ENCODE measurements at regions of chr11 and their contacts with region 1.

Region 1: DNA sequence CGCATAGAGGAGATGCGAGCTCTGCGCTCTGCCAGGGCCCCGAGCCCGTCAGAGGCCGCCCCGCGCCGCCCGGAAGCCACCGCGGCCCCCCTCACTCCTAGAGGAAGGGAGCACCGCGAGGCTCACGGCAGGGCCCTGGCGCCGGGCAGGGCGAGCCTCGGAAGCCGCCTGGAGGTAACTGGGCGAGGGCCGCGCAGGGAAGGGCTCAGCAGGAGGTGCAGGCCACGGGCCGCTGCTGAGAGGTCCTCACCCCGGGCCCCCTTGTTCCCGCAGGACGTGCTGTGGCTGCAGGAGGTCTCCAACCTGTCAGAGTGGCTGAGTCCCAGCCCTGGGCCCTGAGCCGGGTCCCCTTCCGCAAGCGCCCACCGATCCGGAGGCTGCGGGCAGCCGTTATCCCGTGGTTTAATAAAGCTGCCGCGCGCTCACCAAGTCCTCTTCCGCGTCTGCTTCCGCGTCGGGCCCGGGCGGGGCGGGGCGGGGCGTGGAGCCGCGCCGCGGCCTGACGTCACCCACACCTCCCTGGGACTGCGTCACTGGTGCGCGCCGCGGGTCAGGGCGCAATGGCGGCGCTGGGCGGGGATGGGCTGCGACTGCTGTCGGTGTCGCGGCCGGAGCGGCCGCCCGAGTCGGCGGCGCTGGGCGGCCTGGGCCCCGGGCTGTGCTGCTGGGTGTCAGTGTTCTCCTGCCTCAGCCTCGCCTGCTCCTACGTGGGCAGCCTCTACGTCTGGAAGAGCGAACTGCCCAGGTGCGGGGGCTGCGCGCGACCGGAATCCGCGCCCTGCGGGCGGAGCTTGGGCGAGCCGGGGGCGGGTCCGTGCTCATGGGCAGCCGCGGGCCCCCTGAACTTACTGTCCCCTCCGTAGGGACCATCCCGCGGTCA is at the start of gene RCE1:
- DNase-seq: peak; percentile 52
- H3K4me3 ChIP-seq: peak within 1 kb of the TSS; percentile 100
- H3K27ac ChIP-seq: peak within 1 kb of the TSS; percentile 96
- H3K27me3 ChIP-seq: no peaks in the 10 kb centered on the region
- CTCF ChIP-seq: no peak
- polyA plus RNA-seq, gene RCE1: 9.2 and 11.4 TPM in 2 replicates

Region 2: DNA sequence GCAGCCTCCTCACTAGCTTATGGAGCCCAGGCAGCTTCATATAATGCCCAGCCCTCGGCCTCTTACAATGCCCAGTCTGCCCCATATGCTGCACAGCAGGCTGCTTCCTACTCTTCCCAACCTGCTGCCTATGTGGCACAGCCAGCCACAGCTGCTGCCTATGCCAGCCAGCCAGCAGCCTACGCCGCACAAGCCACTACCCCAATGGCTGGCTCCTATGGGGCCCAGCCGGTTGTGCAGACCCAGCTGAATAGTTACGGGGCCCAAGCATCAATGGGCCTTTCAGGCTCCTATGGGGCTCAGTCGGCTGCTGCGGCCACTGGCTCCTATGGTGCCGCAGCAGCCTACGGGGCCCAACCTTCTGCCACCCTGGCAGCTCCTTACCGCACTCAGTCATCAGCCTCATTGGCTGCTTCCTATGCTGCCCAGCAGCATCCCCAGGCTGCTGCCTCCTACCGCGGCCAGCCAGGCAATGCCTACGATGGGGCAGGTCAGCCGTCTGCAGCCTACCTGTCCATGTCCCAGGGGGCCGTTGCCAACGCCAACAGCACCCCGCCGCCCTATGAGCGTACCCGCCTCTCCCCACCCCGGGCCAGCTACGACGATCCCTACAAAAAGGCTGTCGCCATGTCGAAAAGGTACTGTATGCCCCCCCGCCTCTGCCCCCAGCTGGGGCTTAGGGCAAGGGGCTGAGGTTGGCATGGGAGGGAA is 217.9 kb before region 1 on chr11:
- CTCF ChIA-PET with region 1: no interaction called
- POLR2A ChIA-PET with region 1: no interaction called
- DNase-seq: no peak
- H3K4me3 ChIP-seq: no peak overlapping the region
- H3K27ac ChIP-seq: no peak overlapping the region
- H3K27me3 ChIP-seq: no peaks in the 10 kb centered on the region
- CTCF ChIP-seq: no peak

Region 3: GRCh38 chr11:66823700-66824099 is 19.4 kb before region 1 on chr11:
- CTCF ChIA-PET with region 1: no interaction called
- POLR2A ChIA-PET with region 1: interaction called, 10 read pairs
- DNase-seq: no peak
- H3K4me3 ChIP-seq: no peak overlapping the region
- H3K27ac ChIP-seq: no peak overlapping the region
- H3K27me3 ChIP-seq: no peaks in the 10 kb centered on the region
- CTCF ChIP-seq: no peak

Region 4: GRCh38 chr11:66855574-66856495 is 12.7 kb after region 1 on chr11:
- CTCF ChIA-PET with region 1: no interaction called
- POLR2A ChIA-PET with region 1: interaction called, 16 read pairs
- DNase-seq: no peak
- H3K4me3 ChIP-seq: peak overlapping the region; percentile 74
- H3K27ac ChIP-seq: peak overlapping the region; percentile 77
- H3K27me3 ChIP-seq: no peaks in the 10 kb centered on the region
- CTCF ChIP-seq: no peak